Posterior vena cava (tissue), 2 donors: ENCODE measurements at regions of chr5 and their contacts with region 1.

Region 1: DNA sequence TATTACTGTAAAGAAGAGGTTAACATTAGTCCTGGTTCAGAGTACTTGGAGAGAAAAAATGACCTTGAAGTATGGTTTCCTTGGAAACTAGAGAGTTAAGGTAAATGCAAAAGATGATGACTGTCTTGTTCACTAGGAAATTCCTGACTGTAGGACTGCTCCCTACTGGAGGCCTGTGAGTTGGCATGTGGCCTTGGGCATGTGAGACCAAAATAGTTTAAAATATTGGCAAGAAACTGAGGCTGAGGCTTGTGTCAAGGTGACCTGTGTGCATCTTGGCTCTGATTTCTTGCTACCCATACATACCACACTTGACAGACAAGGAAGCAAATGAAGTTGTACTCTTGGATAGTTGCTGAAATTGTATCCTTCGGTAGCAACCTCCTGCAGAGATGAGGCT is 96.5 kb downstream of the TARS1 start:
- DNase-seq: no peak

Region 2: GRCh38 chr5:31901807-31902530 is 1635.3 kb before region 1 on chr5:
- intact Hi-C with region 1: no loop called
- DNase-seq: no peak

Region 3: GRCh38 chr5:33470544-33470943 is 66.7 kb before region 1 on chr5:
- intact Hi-C with region 1: no loop called
- DNase-seq: no peak

Region 4: GRCh38 chr5:33565324-33565723 is 28.1 kb after region 1 on chr5:
- intact Hi-C with region 1: no loop called
- DNase-seq: no peak

Region 5: GRCh38 chr5:35145691-35146315 is 1608.6 kb after region 1 on chr5:
- intact Hi-C with region 1: loop called in 1 of 2 experiments (anchors 5 kb)
- DNase-seq: no peak